ENCODE measurements at regions of chr2 and their contacts with region 1.

Region 1: GRCh38 chr2:217899231-217900009 is 103.4 kb downstream of the TNS1 start:
- DNase-seq: peak; percentile 91 to 94
- ATAC-seq: peak; percentile 58
- H3K4me3 ChIP-seq: no peak overlapping the region
- H3K27ac ChIP-seq: peak overlapping the region; percentile 63 to 91
- H3K4me1 ChIP-seq: peaks cover 4 to 8% of the 10 kb centered on the region in 2 donors
- H3K27me3 ChIP-seq: no peaks in the 10 kb centered on the region

Region 2: DNA sequence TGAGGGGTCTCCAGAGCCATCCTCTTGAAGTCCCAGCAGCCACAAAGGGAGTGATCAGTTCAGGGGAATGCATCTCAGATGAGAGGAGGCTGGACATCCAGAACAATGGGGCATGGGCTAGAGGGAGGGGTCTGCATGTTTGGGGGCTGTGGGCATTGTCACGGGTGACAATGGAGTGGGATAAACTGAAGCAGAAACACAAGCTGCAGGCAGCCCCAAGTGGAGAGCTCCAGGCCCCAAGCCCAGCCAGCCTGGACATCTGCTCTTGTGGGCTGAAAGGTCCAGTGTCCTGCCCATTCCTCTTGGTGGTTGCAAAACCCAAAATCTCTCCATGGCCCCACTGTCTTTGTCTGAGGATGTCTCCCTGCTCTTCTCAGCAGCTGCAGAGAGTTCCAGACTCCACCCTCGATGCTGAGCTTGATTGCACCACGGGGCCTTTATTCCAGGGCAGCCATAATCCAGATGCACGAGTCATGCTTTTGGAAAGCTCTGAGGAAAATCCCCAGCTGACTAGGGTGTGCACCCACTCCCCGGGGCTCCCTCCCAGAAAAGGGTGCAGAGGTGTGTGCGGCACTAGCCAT is 46.0 kb before region 1 on chr2:
- intact Hi-C with region 1: no loop called
- DNase-seq: peak in 1 of 2 donors; percentile 77
- ATAC-seq: no peak
- H3K4me3 ChIP-seq: no peak overlapping the region
- H3K27ac ChIP-seq: peak overlapping the region; percentile 32 to 54
- H3K4me1 ChIP-seq: peaks cover 0 to 2% of the 10 kb centered on the region in 2 donors
- H3K27me3 ChIP-seq: no peaks in the 10 kb centered on the region

Region 3: GRCh38 chr2:217864963-217865772 is 34.3 kb before region 1 on chr2:
- intact Hi-C with region 1: loop called in 1 of 2 experiments (anchors 5 kb)
- DNase-seq: peak in 1 of 2 donors; percentile 32
- ATAC-seq: no peak
- H3K4me3 ChIP-seq: no peak overlapping the region
- H3K27ac ChIP-seq: peak overlapping the region; percentile 12 to 20
- H3K4me1 ChIP-seq: no peaks in the 10 kb centered on the region
- H3K27me3 ChIP-seq: no peaks in the 10 kb centered on the region

Region 4: DNA sequence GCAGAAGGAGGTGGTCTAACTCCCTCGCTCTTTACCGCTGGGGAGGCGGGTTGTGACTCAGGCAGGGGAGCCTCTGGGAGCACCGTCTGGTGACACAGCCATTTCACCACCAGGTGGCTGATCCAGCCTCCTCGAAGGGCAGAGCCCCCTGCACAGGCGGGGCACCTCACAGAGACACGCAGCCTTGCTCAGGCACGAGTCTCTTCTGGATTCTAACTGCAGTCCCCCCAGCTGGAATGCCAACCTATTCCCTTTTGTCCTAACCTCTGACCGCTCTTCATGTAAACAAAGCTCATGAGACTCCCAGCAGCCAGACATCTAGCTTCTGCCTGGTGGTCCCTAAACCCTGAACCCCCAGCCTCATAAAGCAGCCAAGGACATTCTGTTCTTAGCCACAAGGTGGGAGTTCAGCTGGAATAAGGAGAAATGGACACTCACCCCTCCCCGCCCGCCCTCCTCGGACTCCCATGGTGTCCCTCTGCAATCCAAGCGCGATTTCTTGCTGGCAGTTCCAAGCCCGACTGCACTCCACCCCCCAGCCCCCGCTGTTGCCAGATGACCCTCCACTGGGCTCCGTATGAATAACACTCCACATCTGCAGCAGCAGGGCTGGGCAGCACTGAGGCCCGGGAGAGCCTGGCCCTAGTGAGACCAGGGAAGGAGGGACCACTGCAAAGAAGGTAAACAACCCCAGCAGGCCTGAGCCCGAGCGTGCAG is 19.0 kb after region 1 on chr2:
- intact Hi-C with region 1: loop called in 1 of 2 experiments (anchors 1 kb)
- DNase-seq: peak; percentile 78 to 86
- ATAC-seq: peak; percentile 1
- H3K4me3 ChIP-seq: no peak overlapping the region
- H3K27ac ChIP-seq: peak overlapping the region; percentile 90 to 94
- H3K4me1 ChIP-seq: peaks cover 1 to 6% of the 10 kb centered on the region in 2 donors
- H3K27me3 ChIP-seq: no peaks in the 10 kb centered on the region

Region 5: GRCh38 chr2:217934321-217935131 is 35.1 kb after region 1 on chr2:
- intact Hi-C with region 1: loop called in 1 of 2 experiments (anchors 5 kb)
- DNase-seq: peak; percentile 88 to 89
- ATAC-seq: peak; percentile 59
- H3K4me3 ChIP-seq: peak overlapping the region in 1 of 2 donors; percentile 13
- H3K27ac ChIP-seq: peak overlapping the region; percentile 97 to 100
- H3K4me1 ChIP-seq: peaks cover 0 to 9% of the 10 kb centered on the region in 2 donors
- H3K27me3 ChIP-seq: no peaks in the 10 kb centered on the region

Region 6: GRCh38 chr2:217943446-217944389 is 44.3 kb after region 1 on chr2:
- intact Hi-C with region 1: loop called (anchors 5 kb)
- DNase-seq: peak; percentile 93 to 94
- ATAC-seq: peak; percentile 88
- H3K4me3 ChIP-seq: peak overlapping the region; percentile 89 to 97
- H3K27ac ChIP-seq: peak overlapping the region; percentile 47 to 96
- H3K4me1 ChIP-seq: no peaks in the 10 kb centered on the region
- H3K27me3 ChIP-seq: no peaks in the 10 kb centered on the region

Region 7: DNA sequence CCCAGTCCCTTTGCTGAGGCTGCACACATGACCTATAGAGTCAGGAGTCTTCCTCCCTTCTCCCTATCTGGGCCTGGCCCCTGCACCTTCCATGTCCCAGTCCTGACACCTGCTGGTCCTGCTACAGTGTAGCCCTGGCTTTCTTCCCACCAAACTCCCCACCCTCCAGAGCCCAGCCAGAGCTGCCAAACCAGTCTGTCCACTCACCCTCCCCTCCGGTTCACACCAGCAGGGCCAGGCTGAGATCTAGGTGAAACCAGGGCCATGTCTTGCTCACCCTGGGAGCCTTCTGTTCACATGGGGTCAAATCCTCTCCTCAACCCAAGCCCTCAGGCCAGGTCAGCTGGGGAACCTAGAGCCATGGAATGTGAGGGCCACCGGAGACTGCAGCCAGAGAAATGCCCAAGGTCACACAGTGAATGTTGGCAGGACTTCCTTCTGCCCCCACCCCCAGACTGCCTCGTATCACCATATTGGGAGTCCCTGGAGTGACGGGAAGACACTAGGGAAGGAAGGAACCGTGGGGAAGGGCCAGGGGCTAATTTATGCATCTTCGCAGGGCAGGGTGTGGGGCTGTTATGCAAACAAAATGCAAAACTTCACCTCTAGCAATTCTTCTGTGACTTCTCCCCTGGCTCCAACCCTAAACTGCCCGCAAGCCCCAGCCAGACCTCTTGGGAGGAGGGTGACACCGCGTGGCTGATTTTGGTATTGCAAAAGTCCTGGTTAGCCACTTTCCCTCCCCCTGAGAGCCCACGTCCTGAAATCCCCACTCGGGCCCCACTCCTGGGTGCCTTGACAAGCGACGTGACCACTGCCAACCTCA is 88.8 kb after region 1 on chr2:
- intact Hi-C with region 1: loop called in 1 of 2 experiments (anchors 5 kb)
- DNase-seq: peak; percentile 88 to 94
- ATAC-seq: peak; percentile 89
- H3K4me3 ChIP-seq: no peak overlapping the region
- H3K27ac ChIP-seq: peak overlapping the region in 1 of 2 donors; percentile 13
- H3K4me1 ChIP-seq: no peaks in the 10 kb centered on the region
- H3K27me3 ChIP-seq: no peaks in the 10 kb centered on the region

Measured in aorta (tissue), 5 donors.